KBM-7 (cell line): ENCODE measurements at regions of chr1 and their contacts with region 1.

Region 1: DNA sequence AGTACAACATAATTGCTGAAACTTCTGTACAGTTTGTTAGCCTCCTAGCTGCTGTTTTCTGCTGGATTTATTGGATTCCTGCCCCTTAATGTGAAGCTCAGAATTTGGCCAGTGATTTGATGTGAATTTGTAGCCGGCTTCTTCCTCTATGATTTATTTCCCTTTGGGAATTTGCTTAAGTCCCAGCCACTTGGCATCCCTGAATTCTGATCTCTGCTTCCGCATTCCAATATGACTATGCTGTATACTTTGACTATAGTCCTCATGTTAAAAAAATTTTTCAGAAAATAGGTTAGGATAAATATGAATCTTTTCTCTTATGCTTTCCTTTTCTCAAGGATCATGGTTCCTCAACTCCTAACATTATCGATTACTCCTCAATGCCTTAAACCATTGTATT is 12.4 kb upstream of the LRIF1 start:
- DNase-seq: no peak

Region 2: GRCh38 chr1:110594456-110595352 is 381.4 kb before region 1 on chr1:
- in situ Hi-C with region 1: loop called (anchors 25 kb)
- DNase-seq: no peak

Region 3: DNA sequence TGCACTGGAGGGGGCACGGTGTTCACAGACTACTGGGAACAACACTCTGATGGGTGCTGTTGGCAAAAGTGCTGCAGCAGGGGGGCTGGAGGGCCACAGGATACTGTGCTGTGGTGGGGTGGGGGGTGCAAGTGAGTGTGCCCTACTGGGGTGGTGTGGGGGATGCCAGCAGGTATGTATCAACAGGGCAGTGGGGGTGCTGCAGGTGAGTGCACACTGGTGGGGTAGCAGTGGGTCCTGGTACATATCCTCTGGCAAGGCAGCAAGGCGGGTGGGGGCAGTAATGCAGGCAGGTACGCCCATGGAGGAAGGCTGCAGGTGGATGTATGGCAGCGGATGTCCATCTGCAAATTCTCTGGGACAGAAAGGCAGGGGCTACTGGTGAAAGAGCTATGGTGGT is 151.9 kb before region 1 on chr1:
- in situ Hi-C with region 1: no loop called
- DNase-seq: no peak

Region 4: DNA sequence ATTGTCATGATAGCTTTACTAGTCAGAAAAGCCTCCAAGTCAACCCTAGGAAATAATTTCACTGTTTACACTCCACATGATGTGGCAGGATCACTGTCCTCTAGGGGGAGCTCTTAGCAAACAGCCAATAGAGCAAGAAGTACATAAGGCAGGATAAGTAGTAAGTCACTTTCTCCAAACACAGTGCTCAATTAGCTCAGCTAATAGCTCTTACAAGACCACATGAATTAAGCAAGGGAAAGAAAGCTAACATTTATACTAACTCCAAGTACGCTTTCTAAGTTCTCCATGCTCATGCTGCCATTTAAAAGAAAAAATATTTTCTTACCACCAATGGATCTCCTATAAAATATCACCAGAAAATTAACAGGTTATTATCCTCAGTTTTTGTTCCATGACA is 54.5 kb after region 1 on chr1:
- in situ Hi-C with region 1: no loop called
- DNase-seq: peak; percentile 68